T-cell (primary cell): ENCODE measurements at regions of chr2 and their contacts with region 1.

Region 1: GRCh38 chr2:10382354-10383061 is 65.6 kb downstream of the ODC1 start:
- DNase-seq: peak; percentile 9 to 82 (median 56)
- ATAC-seq: peak; percentile 80 to 94 (median 81)
- H3K4me3 ChIP-seq: peak overlapping the region; percentile 35 to 58
- H3K4me3 Mint-ChIP-seq: peak overlapping the region; percentile 46 to 78 (median 65)
- H3K27ac ChIP-seq: peak overlapping the region; percentile 69
- H3K27ac Mint-ChIP-seq: peak overlapping the region; percentile 89 to 93
- H3K4me1 ChIP-seq: peaks cover 51 to 98% of the 10 kb centered on the region in 2 experiments
- H3K4me1 Mint-ChIP-seq: peaks cover 88 to 94% (median 92%) of the 10 kb centered on the region in 3 donors
- H3K27me3 ChIP-seq: no peaks in the 10 kb centered on the region
- H3K27me3 Mint-ChIP-seq: no peaks in the 10 kb centered on the region

Region 2: DNA sequence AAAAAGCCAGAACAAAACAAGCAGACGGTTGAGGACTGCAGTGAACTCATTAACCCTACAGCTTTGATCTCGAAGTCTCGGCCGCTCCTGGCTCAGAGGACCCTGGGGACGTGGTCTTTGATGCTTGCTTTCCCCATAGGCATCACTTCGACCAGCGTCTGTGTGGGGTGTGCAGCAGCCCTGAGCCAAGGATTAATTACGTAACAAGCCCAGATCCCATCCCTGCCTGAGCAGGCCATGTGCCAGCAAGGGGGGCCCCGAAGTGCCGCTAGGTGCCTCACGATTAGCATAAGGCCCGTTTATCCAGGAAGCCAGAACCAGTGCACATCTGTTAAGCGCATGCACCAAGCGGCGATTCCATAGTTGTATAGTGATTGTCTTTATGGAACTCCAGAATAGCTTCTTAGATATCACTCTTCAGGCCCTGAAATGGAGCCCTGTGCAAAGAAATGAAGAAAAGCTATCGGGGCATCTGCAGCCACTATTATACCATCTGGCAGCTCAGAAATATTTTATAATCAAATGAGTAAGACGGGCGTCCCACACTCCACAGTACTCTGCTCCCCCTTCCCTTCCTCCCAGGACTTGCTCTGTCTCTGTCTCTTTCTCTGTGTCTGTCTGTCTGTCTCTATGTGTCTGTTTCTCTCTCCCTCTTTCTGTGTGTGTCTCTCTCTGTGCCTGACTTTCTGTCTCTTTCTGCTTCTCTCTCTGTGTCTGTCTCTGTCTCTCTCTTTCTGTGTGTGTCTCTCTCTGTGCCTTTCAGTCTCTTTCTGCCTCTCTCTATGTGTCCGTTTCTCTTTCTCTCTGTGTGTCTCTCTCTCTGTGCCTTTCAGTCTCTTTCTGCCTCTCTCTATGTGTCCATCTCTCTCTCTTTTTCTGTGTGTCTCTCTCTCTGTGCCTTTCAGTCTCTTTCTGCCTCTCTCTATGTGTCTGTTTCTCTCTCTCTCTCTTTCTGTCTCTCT is 38.1 kb before region 1 on chr2:
- CTCF ChIA-PET with region 1: no interaction called
- POLR2A ChIA-PET with region 1: interaction called in 1 of 2 experiments, 12 read pairs
- DNase-seq: no peak
- ATAC-seq: no peak
- H3K4me3 ChIP-seq: no peak overlapping the region
- H3K4me3 Mint-ChIP-seq: peak overlapping the region in 1 of 3 donors; percentile 43
- H3K27ac ChIP-seq: no peak overlapping the region
- H3K27ac Mint-ChIP-seq: peak overlapping the region; percentile 2 to 15
- H3K4me1 ChIP-seq: peaks cover 22 to 71% of the 10 kb centered on the region in 2 experiments
- H3K4me1 Mint-ChIP-seq: peaks cover 78 to 82% (median 79%) of the 10 kb centered on the region in 3 donors
- H3K27me3 ChIP-seq: no peaks in the 10 kb centered on the region
- H3K27me3 Mint-ChIP-seq: no peaks in the 10 kb centered on the region

Region 3: GRCh38 chr2:10448208-10448645 is 65.7 kb after region 1 on chr2 and contains the start of gene ODC1:
- CTCF ChIA-PET with region 1: no interaction called
- POLR2A ChIA-PET with region 1: interaction called in 1 of 2 experiments, 13 read pairs
- DNase-seq: peak; percentile 91 to 99 (median 95)
- ATAC-seq: peak; percentile 86 to 91 (median 87)
- H3K4me3 ChIP-seq: peak within 1 kb of the TSS; percentile 60 to 64
- H3K4me3 Mint-ChIP-seq: peak within 1 kb of the TSS; percentile 79 to 85 (median 81)
- H3K27ac ChIP-seq: peak within 1 kb of the TSS; percentile 96
- H3K27ac Mint-ChIP-seq: peak within 1 kb of the TSS; percentile 81 to 86
- H3K4me1 ChIP-seq: peaks cover 6 to 33% of the 10 kb centered on the region in 2 experiments
- H3K4me1 Mint-ChIP-seq: peaks cover 16 to 41% (median 41%) of the 10 kb centered on the region in 3 donors
- H3K27me3 ChIP-seq: no peaks in the 10 kb centered on the region
- H3K27me3 Mint-ChIP-seq: no peaks in the 10 kb centered on the region
- total RNA-seq, gene ODC1: 40.6 to 102 (median 53.3) TPM

Region 4: GRCh38 chr2:10514743-10515142 is 132.2 kb after region 1 on chr2:
- CTCF ChIA-PET with region 1: no interaction called
- POLR2A ChIA-PET with region 1: no interaction called
- DNase-seq: peak in 1 of 35 experiments; percentile 2
- ATAC-seq: no peak
- H3K4me3 ChIP-seq: no peak overlapping the region
- H3K4me3 Mint-ChIP-seq: no peak overlapping the region
- H3K27ac ChIP-seq: no peak overlapping the region
- H3K27ac Mint-ChIP-seq: no peak overlapping the region
- H3K4me1 ChIP-seq: peaks cover 0 to 3% of the 10 kb centered on the region in 2 experiments
- H3K4me1 Mint-ChIP-seq: no peaks in the 10 kb centered on the region
- H3K27me3 ChIP-seq: no peaks in the 10 kb centered on the region
- H3K27me3 Mint-ChIP-seq: no peaks in the 10 kb centered on the region

Region 5: GRCh38 chr2:10544252-10544651 is 161.7 kb after region 1 on chr2:
- CTCF ChIA-PET with region 1: no interaction called
- POLR2A ChIA-PET with region 1: no interaction called
- DNase-seq: peak in 29 of 35 experiments; percentile 2 to 72 (median 36)
- ATAC-seq: peak; percentile 75 to 95 (median 87)
- H3K4me3 ChIP-seq: no peak overlapping the region
- H3K4me3 Mint-ChIP-seq: peak overlapping the region in 2 of 3 donors; percentile 17 to 27
- H3K27ac ChIP-seq: peak overlapping the region; percentile 18
- H3K27ac Mint-ChIP-seq: peak overlapping the region; percentile 34 to 55
- H3K4me1 ChIP-seq: peaks cover 0 to 20% of the 10 kb centered on the region in 2 experiments
- H3K4me1 Mint-ChIP-seq: peaks cover 16 to 21% (median 19%) of the 10 kb centered on the region in 3 donors
- H3K27me3 ChIP-seq: peaks cover 0 to 42% of the 10 kb centered on the region in 2 experiments
- H3K27me3 Mint-ChIP-seq: peaks cover 28 to 30% of the 10 kb centered on the region in 2 donors